ENCODE measurements at regions of chr7 and their contacts with region 1.

Region 1: GRCh38 chr7:805261-805660 is 27.0 kb upstream of the SUN1 start:
- DNase-seq: peak in 1 of 2 experiments; percentile 69
- H3K4me3 ChIP-seq: no peak overlapping the region
- H3K4me3 Mint-ChIP-seq: no peak overlapping the region
- H3K27ac Mint-ChIP-seq: peak overlapping the region; percentile 32
- H3K4me1 ChIP-seq: peaks cover 7% of the 10 kb centered on the region; the same call in 1 of the 2 replicates
- H3K4me1 Mint-ChIP-seq: peaks cover 7% of the 10 kb centered on the region
- H3K27me3 ChIP-seq: no peaks in the 10 kb centered on the region
- H3K27me3 Mint-ChIP-seq: no peaks in the 10 kb centered on the region
- CTCF ChIP-seq: no peak

Region 2: DNA sequence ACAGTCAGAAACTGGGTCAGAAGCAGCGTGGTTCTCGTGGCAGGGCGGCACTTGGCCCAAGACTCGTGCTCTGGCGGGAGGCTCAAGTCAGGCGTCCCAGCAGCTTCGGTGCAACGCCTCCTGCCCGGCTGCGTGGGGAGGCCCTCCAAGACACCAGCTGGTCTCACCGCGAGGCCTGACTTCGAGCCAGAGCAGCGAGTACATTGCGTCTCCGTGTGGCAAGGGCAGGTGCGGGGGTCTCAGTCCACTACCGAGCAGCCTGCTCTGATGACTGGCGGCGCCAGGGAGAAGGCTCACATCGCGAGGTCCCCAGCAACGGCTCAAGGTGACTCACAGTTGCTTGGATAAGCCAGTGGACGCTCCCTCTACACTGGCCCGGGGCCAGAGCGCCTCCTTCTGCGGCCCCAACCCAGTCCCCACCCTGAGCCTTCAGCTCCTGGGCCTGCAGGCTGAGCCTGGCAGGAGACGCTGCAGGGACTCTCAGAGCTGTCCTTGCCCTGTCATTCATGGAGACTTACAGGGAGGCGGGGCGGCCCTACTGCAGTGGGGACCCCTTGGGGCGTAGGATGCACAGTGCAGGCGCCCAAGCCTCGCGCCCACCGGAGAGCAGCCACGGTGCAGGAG is 36.3 kb before region 1 on chr7:
- CTCF ChIA-PET with region 1: interaction called, 10 read pairs
- POLR2A ChIA-PET with region 1: no interaction called
- intact Hi-C with region 1: no loop called
- DNase-seq: peak in 1 of 2 experiments; percentile 19
- H3K4me3 ChIP-seq: no peak overlapping the region
- H3K4me3 Mint-ChIP-seq: no peak overlapping the region
- H3K27ac Mint-ChIP-seq: peak overlapping the region; percentile 39
- H3K4me1 ChIP-seq: peaks cover 24% of the 10 kb centered on the region
- H3K4me1 Mint-ChIP-seq: peaks cover 7% of the 10 kb centered on the region
- H3K27me3 ChIP-seq: no peaks in the 10 kb centered on the region
- H3K27me3 Mint-ChIP-seq: no peaks in the 10 kb centered on the region
- CTCF ChIP-seq: no peak

Region 3: GRCh38 chr7:924541-925261 is 119.4 kb after region 1 on chr7:
- CTCF ChIA-PET with region 1: no interaction called
- POLR2A ChIA-PET with region 1: no interaction called
- intact Hi-C with region 1: no loop called
- DNase-seq: peak in 1 of 2 experiments; percentile 37
- H3K4me3 ChIP-seq: no peak overlapping the region
- H3K4me3 Mint-ChIP-seq: no peak overlapping the region
- H3K27ac Mint-ChIP-seq: no peak overlapping the region
- H3K4me1 ChIP-seq: peaks cover 11% of the 10 kb centered on the region; the same call in 1 of the 2 replicates
- H3K4me1 Mint-ChIP-seq: peaks cover 8% of the 10 kb centered on the region
- H3K27me3 ChIP-seq: no peaks in the 10 kb centered on the region
- H3K27me3 Mint-ChIP-seq: no peaks in the 10 kb centered on the region
- CTCF ChIP-seq: no peak